ENCODE measurements at regions of chr18 and their contacts with region 1.

Region 1: GRCh38 chr18:33644494-33644893 is 66.5 kb downstream of the ASXL3 start:
- DNase-seq: no peak
- ATAC-seq: no peak
- H3K4me3 ChIP-seq: no peak overlapping the region
- H3K27ac ChIP-seq: no peak overlapping the region
- H3K4me1 ChIP-seq: no peaks in the 10 kb centered on the region
- H3K27me3 ChIP-seq: no peaks in the 10 kb centered on the region

Region 2: DNA sequence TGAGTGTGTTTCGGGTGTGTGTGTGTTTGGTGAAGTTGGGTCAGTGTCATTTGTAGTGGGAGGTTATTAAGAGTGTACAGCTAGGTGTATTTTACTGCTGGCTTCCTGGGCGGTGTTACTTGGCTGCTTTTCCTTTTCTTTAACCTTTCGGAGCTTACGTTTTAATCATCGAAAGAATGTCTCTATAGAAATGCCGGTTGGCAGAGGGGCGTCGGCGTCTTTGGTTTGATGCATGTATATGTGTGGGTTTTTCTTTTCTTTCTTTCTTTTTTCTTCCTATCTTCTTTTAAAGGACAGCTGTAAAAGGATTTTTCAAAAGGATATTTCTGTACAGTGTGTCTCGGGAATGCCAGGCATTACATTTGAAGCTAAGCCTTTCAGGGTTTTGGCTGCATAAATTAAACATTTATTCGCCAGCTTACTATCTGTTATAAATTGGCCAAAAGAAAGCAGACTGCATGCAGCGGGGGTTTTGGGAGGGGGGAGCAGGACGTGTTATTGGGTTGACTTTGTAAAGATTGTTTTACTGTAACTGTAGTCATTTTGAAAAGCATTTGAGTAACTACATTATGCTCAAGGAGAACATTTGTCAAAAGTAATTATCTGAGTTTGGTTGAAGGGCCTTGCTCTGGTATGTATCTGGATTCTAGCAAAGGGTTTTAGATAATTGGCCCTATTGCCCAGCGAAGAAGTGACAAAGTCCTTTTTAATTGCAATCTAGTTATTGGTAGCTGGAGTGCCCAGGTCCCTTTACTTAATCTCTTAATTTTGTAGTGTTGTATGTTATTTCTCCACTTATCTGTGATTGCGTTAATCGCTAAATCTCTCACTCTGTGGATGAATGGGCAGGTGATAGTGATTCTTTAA is 64.9 kb before region 1 on chr18:
- intact Hi-C with region 1: loop called in 1 of 4 experiments (anchors 10 kb)
- DNase-seq: peak in 1 of 3 donors; percentile 30
- ATAC-seq: peak in 1 of 2 donors; percentile 15
- H3K4me3 ChIP-seq: peak overlapping the region; percentile 97
- H3K27ac ChIP-seq: peak overlapping the region; percentile 98
- H3K4me1 ChIP-seq: no peaks in the 10 kb centered on the region
- H3K27me3 ChIP-seq: no peaks in the 10 kb centered on the region

Region 3: DNA sequence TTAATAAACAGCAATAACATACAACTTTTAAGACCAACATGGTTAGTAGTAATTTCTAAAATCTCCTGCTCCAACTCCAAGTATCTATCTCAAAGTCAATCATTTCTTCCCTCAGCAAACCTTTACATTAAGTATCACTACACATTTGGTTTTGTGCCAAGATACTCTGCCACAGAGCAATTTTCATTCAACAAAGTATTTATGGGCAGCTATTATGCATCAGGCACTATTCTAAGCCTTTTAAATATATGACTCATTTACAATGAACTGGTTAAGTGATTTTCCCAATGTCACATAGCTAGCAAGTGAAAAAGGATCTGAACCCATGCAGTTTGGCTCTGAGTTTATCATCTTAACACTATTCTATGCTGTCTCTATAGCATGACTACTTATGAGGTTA is 315.9 kb after region 1 on chr18:
- intact Hi-C with region 1: no loop called
- DNase-seq: no peak
- ATAC-seq: no peak
- H3K4me3 ChIP-seq: no peak overlapping the region
- H3K27ac ChIP-seq: no peak overlapping the region
- H3K4me1 ChIP-seq: no peaks in the 10 kb centered on the region
- H3K27me3 ChIP-seq: no peaks in the 10 kb centered on the region